Mammary epithelial cell (primary cell): ENCODE measurements at regions of chr7 and their contacts with region 1.

Region 1: GRCh38 chr7:155918714-155919399 is 106.6 kb upstream of the SHH start:
- DNase-seq: peak; percentile 84
- H3K4me3 ChIP-seq: no peak overlapping the region
- H3K27ac ChIP-seq: no peak overlapping the region
- H3K4me1 ChIP-seq: peaks cover 25% of the 10 kb centered on the region
- H3K27me3 ChIP-seq: no peaks in the 10 kb centered on the region
- CTCF ChIP-seq: no peak

Region 2: GRCh38 chr7:155951554-155952158 is 32.8 kb after region 1 on chr7:
- CTCF ChIA-PET with region 1: no interaction called
- dilution Hi-C with region 1: no loop called
- in situ Hi-C with region 1: loop called in 1 of 2 experiments (anchors 5 kb)
- intact Hi-C with region 1: loop called (anchors 1 kb)
- DNase-seq: peak; percentile 93
- H3K4me3 ChIP-seq: peak overlapping the region in 1 of 3 experiments; percentile 19
- H3K27ac ChIP-seq: peak overlapping the region; percentile 77
- H3K4me1 ChIP-seq: peaks cover 26% of the 10 kb centered on the region
- H3K27me3 ChIP-seq: no peaks in the 10 kb centered on the region
- CTCF ChIP-seq: no peak

Region 3: GRCh38 chr7:155961241-155962190 is 42.7 kb after region 1 on chr7:
- CTCF ChIA-PET with region 1: no interaction called
- dilution Hi-C with region 1: no loop called
- in situ Hi-C with region 1: no loop called
- intact Hi-C with region 1: loop called (anchors 2 kb)
- DNase-seq: peak; percentile 84
- H3K4me3 ChIP-seq: peak overlapping the region in 2 of 3 experiments; percentile 25 to 44
- H3K27ac ChIP-seq: peak overlapping the region; percentile 68
- H3K4me1 ChIP-seq: peaks cover 33% of the 10 kb centered on the region
- H3K27me3 ChIP-seq: no peaks in the 10 kb centered on the region
- CTCF ChIP-seq: no peak